Tibial artery (tissue), 4 donors: ENCODE measurements at regions of chr19 and their contacts with region 1.

Region 1: DNA sequence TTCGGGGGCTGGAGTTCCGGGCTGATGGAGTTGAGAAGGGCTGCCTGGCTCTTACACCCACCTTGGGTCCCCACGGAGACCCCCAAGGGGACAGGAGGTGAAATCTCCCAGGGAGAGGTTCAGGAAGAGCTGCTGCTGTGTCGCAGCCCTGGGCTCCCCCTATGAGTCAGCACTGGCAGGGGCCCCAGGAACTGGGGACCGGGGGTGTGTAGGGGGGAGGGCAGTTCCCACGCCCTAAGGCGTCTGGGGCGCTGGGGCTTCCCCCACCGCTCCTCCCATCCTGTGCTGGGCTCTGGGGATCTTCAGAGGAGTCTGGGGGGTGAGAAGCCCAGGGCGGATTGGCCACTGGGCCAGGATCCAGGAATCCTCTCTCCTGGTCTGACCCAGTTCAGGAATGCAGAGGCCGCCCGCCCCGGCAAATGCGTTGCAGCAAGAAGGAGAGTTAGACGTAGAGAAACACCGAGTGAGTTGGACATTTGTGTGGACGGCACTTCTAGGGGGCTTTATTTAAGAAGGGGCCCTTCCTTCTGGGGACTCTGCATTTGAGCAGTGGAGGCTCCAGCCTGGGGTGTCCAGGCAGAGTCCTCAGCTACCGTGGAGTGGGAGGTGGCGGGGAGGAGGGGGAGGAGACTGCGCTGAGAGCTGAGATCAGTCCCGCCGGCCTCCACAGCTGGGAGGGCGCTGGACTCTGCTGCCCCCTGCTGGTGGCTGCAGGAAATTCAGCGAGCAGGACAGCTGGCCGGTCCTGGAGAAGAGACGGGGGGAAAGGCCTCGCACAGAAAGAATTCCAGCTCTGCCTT is 15.0 kb upstream of the NANOS3 start:
- DNase-seq: peak; percentile 92 to 97
- H3K4me3 ChIP-seq: peak overlapping the region; percentile 47
- H3K27ac ChIP-seq: peak overlapping the region; percentile 86 to 94
- H3K4me1 ChIP-seq: peaks cover 0 to 39% (median 19%) of the 10 kb centered on the region in 4 donors
- H3K27me3 ChIP-seq: peaks cover 0 to 3% of the 10 kb centered on the region in 2 donors
- CTCF ChIP-seq: peak; percentile 99

Region 2: DNA sequence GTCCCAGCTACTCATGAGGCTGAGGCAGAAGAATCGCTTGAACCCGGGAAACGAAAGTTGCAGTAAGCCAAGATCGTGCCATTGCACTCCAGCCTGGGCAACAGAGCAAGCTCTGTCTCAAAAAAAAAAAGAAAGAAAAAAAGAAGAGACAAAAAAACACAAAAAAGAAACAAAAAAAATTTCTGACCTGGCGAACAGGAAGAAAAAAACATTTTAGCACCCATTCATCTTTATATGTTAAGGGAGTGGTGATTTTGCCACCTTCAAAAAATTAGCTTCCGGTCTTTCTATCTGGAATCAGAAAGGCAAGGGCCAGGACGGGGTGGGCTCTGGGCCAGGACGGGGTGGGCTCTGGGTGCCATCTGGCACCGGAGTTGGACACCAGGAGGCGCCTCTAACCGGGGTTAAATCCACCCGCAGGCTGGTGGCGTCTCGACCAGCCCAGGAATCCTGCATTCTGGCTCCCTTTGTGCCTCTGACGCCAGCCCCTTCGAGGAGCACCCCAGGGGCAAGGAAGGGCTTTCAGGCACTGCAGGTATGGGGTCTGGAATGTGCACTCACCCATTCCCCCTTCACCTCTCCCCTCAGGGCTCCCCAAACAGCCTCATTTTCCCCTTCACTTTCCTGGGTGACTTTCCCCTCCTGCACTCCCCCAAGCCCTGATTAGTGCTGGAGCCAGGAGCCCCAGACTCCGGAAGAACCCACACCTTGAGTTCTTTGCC is 77.0 kb before region 1 on chr19:
- intact Hi-C with region 1: loop called (anchors 2 kb)
- DNase-seq: peak; percentile 72 to 91
- H3K4me3 ChIP-seq: no peak overlapping the region
- H3K27ac ChIP-seq: peak overlapping the region; percentile 63 to 92
- H3K4me1 ChIP-seq: peaks cover 5 to 63% (median 37%) of the 10 kb centered on the region in 4 donors
- H3K27me3 ChIP-seq: no peaks in the 10 kb centered on the region
- CTCF ChIP-seq: peak; percentile 69 to 72

Region 3: DNA sequence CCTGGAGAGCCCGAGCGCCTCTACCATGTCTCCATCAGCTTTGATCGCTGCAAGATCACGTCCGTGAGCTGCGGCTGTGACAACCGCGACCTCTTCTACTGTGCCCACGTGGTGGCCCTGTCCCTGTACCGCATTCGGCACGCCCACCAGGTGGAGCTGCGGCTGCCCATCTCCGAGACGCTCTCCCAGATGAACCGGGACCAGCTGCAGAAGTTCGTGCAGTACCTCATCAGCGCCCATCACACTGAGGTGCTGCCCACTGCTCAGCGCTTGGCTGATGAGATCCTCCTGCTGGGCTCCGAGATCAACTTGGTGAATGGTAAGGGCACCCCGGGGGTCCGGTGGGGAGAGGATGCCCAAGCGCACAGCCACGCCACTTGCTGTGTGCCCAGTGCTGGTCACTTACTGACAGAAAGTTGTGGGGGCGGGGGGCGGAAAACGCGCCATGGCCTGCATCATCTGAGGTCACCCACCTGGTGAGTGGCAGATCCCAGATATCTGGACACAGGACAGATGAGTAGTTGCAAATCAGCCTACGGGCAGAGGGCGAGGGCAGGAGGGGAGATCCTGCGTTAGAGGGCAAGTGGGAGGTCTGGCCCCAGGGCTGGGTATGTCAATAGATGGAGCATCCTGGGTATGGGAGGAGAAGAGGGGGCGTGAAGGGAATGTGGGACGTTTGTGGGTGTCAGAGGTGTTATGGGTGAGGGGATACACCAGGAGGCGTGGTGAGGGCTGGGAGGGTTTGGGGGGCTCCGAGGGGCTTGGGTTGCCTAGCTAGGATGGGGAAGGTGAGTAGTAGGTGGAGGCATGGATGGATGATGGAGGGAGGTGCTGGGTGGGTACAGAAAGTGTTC is 56.9 kb before region 1 on chr19:
- intact Hi-C with region 1: no loop called
- DNase-seq: no peak
- H3K4me3 ChIP-seq: no peak overlapping the region
- H3K27ac ChIP-seq: no peak overlapping the region
- H3K4me1 ChIP-seq: no peaks in the 10 kb centered on the region
- H3K27me3 ChIP-seq: no peaks in the 10 kb centered on the region
- CTCF ChIP-seq: peak in 1 of 2 experiments; percentile 35